Vagina (tissue), 2 donors: ENCODE measurements at regions of chr11 and their contacts with region 1.

Region 1: GRCh38 chr11:64317957-64318693 is at the start of gene PRDX5:
- DNase-seq: no peak
- H3K4me3 ChIP-seq: peak within 1 kb of the TSS; percentile 90 to 95
- H3K27ac ChIP-seq: peak within 1 kb of the TSS; percentile 97
- H3K4me1 ChIP-seq: peaks cover 52% of the 10 kb centered on the region
- H3K27me3 ChIP-seq: no peaks in the 10 kb centered on the region
- CTCF ChIP-seq: no peak
- POLR2A ChIP-seq: peak in 1 of 2 donors; percentile 85
- total RNA-seq, gene PRDX5: 229 TPM

Region 2: DNA sequence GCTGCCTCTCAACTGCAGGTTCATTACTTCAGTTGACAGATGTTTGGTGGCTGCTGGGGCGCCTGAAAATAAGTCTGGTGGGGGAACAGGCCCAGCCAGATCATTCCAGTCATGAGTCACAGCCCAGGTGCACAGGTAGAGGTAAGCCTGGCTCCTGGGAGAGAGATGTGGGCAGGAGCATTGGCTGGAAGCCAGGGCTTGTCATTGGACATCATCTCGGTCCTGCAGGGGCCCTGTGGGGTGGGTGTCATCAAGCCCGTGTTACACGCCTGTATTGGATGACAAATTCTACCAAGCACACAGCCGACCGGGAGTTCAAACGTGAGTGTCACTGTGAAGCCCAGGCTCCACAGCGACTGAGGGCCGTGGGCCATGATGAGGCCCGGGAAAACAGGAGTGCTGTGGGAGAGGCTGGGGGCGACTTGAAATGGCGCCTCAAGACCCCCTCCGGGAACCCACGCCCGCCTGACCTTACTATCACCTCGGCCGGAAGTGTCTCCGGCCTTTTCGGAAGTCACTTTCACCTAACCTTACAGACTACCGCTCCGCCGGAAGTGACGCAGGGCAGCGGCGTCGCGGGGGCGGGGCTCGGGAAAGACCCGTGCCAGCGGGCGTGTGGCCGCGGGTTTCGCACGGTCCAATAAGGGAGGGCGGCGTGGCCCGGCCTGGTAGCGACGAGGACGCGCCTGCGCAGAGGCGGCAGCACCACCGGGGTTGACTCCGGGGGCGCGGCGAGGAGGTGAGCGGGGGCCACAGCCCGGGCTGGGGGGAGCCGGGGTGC is 77.5 kb before region 1 on chr11 and contains the start of gene FKBP2:
- intact Hi-C with region 1: loop called (anchors 2 kb)
- DNase-seq: peak in 1 of 2 donors; percentile 99
- H3K4me3 ChIP-seq: peak within 1 kb of the TSS; percentile 87 to 99
- H3K27ac ChIP-seq: peak within 1 kb of the TSS; percentile 100
- H3K4me1 ChIP-seq: peaks cover 61% of the 10 kb centered on the region
- H3K27me3 ChIP-seq: no peaks in the 10 kb centered on the region
- CTCF ChIP-seq: no peak
- POLR2A ChIP-seq: peak in 1 of 2 donors; percentile 65
- total RNA-seq, gene FKBP2: 66.0 TPM

Region 3: DNA sequence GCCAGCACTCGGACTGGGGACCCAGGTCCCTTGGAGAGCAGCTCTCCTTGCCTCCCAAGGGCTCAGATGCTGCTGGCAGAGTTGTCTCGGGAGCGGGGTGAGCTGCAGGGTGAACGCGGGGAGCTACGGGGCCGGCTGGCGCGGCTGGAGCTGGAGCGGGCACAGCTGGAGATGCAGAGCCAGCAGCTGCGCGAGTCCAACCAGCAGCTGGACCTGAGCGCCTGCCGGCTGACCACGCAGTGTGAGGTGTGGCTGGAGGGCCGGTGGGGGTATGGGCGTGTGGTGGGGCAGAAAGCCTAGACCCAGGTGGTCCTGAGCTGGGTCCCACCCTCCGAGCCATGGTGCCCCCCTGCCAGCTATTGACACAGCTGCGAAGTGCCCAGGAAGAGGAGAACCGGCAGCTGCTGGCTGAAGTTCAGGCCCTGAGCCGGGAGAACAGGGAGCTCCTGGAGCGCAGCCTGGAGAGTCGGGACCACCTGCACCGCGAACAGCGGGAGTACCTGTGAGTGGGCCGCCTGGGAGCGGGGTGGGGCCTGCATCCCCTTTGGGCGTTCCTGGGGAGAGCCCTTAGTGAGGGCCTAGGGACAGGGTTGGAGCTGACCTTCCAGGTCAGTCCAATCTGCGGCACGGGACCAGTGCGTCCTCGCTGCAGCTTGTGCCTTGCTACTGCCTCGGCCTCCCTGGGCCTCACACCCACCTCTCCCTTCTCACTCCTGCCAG is 35.0 kb after region 1 on chr11:
- intact Hi-C with region 1: loop called (anchors 5 kb)
- DNase-seq: no peak
- H3K4me3 ChIP-seq: no peak overlapping the region
- H3K27ac ChIP-seq: no peak overlapping the region
- H3K4me1 ChIP-seq: peaks cover 29% of the 10 kb centered on the region
- H3K27me3 ChIP-seq: no peaks in the 10 kb centered on the region
- CTCF ChIP-seq: no peak
- POLR2A ChIP-seq: no peak